Mammary epithelial cell (primary cell): ENCODE measurements at regions of chr22 and their contacts with region 1.

Region 1: GRCh38 chr22:40922484-40923303 is 28.5 kb upstream of the RBX1 start:
- DNase-seq: peak; percentile 35
- H3K4me3 ChIP-seq: no peak overlapping the region
- H3K27ac ChIP-seq: no peak overlapping the region
- H3K4me1 ChIP-seq: no peaks in the 10 kb centered on the region
- H3K27me3 ChIP-seq: no peaks in the 10 kb centered on the region
- CTCF ChIP-seq: peak; percentile 50 to 57

Region 2: GRCh38 chr22:41123151-41123550 is 200.5 kb after region 1 on chr22:
- CTCF ChIA-PET with region 1: interaction called, 4 read pairs
- dilution Hi-C with region 1: no loop called
- in situ Hi-C with region 1: no loop called
- intact Hi-C with region 1: loop called (anchors 5 kb)
- DNase-seq: no peak
- H3K4me3 ChIP-seq: no peak overlapping the region
- H3K27ac ChIP-seq: no peak overlapping the region
- H3K4me1 ChIP-seq: peaks cover 12% of the 10 kb centered on the region
- H3K27me3 ChIP-seq: no peaks in the 10 kb centered on the region
- CTCF ChIP-seq: no peak

Region 3: GRCh38 chr22:41181349-41182241 is 258.9 kb after region 1 on chr22:
- CTCF ChIA-PET with region 1: interaction called, 13 read pairs
- dilution Hi-C with region 1: no loop called
- in situ Hi-C with region 1: no loop called
- intact Hi-C with region 1: no loop called
- DNase-seq: peak; percentile 59
- H3K4me3 ChIP-seq: no peak overlapping the region
- H3K27ac ChIP-seq: no peak overlapping the region
- H3K4me1 ChIP-seq: peaks cover 10% of the 10 kb centered on the region
- H3K27me3 ChIP-seq: no peaks in the 10 kb centered on the region
- CTCF ChIP-seq: no peak

Region 4: DNA sequence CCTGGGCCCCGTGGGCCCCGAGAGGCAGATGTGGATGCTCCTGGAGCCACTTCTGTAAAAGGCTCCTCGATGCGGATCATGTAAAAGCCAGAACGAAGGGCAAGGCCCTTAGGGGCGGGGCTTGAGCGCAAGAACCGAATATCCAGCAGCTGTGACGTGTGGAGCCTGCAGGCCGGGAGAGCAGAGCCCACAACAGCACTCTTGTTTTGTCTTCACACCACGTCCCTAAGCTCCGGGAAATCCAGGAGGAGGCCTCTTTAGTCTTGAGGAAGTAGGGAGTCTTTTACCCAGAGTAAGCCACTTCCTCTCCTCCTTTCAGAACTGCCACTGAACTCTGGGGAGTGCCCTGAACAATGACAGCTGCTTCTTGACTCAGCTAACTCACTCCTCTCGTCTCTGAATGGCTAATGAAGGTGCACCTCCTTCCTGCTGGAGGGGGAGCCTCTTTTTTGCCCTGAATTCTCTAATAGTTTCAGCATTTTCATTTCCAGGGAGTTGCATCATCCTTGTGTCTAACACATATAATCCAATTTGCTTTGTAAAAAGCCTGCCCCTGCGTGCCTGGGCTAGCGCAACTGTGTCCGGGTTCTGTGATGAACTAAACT is 295.0 kb after region 1 on chr22:
- CTCF ChIA-PET with region 1: no interaction called
- dilution Hi-C with region 1: no loop called
- in situ Hi-C with region 1: no loop called
- intact Hi-C with region 1: loop called (anchors 5 kb)
- DNase-seq: no peak
- H3K4me3 ChIP-seq: no peak overlapping the region
- H3K27ac ChIP-seq: peak overlapping the region; percentile 9
- H3K4me1 ChIP-seq: peaks cover 12% of the 10 kb centered on the region
- H3K27me3 ChIP-seq: no peaks in the 10 kb centered on the region
- CTCF ChIP-seq: no peak

Region 5: GRCh38 chr22:41237707-41238569 is 315.2 kb after region 1 on chr22:
- CTCF ChIA-PET with region 1: interaction called, 21 read pairs
- dilution Hi-C with region 1: no loop called
- in situ Hi-C with region 1: no loop called
- intact Hi-C with region 1: loop called (anchors 1 kb)
- DNase-seq: peak; percentile 67
- H3K4me3 ChIP-seq: peak overlapping the region in 2 of 3 experiments; percentile 47
- H3K27ac ChIP-seq: no peak overlapping the region
- H3K4me1 ChIP-seq: peaks cover 20% of the 10 kb centered on the region
- H3K27me3 ChIP-seq: no peaks in the 10 kb centered on the region
- CTCF ChIP-seq: peak; percentile 30 to 79

Region 6: DNA sequence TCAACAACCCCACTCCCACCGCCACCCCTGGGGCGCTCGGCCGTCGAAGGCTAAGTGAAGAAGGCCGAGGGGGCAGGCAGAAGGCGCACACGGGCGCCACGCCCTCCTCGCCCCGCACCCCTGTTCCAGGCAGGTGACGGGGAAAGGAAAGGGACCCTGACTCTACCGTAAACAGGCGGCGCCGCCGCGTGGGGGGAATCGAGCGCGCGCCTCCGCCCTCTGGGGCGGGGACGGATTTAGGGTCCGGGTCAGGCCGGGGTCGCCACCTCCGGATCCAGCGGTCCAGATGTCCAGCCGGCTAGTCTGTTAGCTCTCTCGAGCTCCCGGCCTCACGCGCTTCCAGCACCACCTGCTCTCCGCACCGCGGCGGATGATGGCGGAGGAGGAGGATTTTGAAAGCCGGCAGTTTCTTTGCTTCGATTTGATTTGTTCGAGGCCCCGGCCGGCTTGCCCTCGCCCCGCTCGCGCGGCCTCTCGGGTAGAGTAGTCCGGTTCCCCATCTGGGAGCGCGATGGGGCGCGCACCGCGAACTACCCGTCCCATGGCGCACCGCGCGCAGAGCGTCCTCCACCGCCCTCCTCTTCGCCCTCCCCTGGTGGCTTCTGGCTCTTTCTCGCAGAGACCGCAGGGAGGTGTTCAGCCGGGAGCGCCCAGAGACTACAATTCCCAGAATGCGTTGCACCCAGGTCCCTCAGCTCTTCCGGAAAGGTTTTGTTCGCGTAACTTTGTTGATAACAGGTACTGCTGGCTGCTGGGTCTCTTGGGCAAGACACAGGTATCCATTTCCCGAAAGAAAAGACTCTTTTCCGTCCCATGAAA is 363.3 kb after region 1 on chr22 and contains the start of gene RANGAP1:
- CTCF ChIA-PET with region 1: no interaction called
- dilution Hi-C with region 1: no loop called
- in situ Hi-C with region 1: no loop called
- intact Hi-C with region 1: loop called (anchors 5 kb)
- DNase-seq: peak; percentile 99
- H3K4me3 ChIP-seq: peak within 1 kb of the TSS; percentile 79 to 90 (median 88)
- H3K27ac ChIP-seq: peak within 1 kb of the TSS; percentile 90
- H3K4me1 ChIP-seq: peaks cover 58% of the 10 kb centered on the region
- H3K27me3 ChIP-seq: no peaks in the 10 kb centered on the region
- CTCF ChIP-seq: peak in 1 of 2 donors; percentile 36
- total RNA-seq, gene RANGAP1: 47.8 to 127 TPM